A549 (cell line): ENCODE measurements at regions of chr17 and their contacts with region 1.

Region 1: GRCh38 chr17:309361-309888 is 43.2 kb downstream of the RPH3AL start:
- DNase-seq: peak; percentile 44 to 57
- ATAC-seq: peak; percentile 68 to 80
- H3K4me3 ChIP-seq: no peak overlapping the region
- H3K27ac ChIP-seq: no peak overlapping the region
- H3K4me1 ChIP-seq: peaks cover 11% of the 10 kb centered on the region; the same call in 2 of the 3 replicates
- CTCF ChIP-seq: peak; percentile 34
- EP300 ChIP-seq: no peak
- POLR2A ChIP-seq: no peak
- RAD21 ChIP-seq: 0 out of 5 replicates have a peak, but pooled peaks of 1 of the 2 experiments have one; percentile 11

Region 2: GRCh38 chr17:292531-293382 is 16.7 kb before region 1 on chr17:
- CTCF ChIA-PET with region 1: interaction called, 11 read pairs
- POLR2A ChIA-PET with region 1: no interaction called
- DNase-seq: no peak
- ATAC-seq: no peak; a peak in 1 of 6 replicates
- H3K4me3 ChIP-seq: no peak overlapping the region
- H3K27ac ChIP-seq: no peak overlapping the region
- H3K4me1 ChIP-seq: no peaks in the 10 kb centered on the region
- CTCF ChIP-seq: no peak
- EP300 ChIP-seq: no peak
- POLR2A ChIP-seq: no peak
- RAD21 ChIP-seq: no peak